A673 (cell line): ENCODE measurements at regions of chr4 and their contacts with region 1.

Region 1: DNA sequence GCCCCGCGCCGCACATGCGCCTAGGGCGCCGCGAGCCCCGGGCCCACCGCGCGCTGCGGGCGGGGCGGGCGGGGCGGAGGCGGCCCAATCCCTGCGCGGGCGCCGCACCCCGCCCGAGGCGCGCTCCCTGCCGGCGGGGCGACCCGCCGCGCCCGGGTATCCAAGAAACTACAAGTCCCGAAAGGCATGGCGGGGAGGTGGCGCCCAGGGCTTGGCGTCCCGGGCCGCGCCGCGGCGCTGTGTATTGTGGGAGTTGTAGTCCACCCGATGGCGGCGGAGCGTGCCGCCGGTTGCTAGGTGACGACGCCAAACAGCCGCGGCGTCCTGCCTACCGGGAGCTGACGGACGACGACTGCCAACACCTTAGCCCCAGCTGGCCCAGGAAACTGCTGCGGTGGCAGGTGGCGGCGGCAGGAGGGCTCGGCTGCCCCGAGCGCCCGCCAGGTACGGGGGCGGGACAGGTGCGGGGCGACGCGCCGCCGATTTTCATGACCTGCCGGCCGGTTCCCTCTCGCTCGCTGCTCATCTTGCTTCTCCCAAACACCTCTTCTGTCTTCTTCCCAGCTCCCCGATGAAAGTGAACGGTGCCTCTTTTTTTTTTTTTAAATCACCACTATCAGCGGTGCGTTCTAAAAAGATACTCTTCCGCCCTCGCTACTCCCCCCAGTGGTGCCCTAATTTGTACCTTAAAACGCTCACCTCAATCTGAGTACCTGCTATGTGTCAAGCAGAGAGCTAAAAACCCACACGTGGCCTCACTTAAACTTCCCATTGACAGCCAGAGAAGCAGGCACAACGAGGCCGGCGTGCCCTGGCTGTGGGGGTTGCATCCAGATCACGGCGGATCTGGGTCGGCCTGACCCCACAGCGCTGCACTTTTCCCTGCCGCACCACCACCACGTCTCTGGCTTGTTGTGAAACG is at the start of gene CFAP99:
- DNase-seq: peak; percentile 98
- H3K4me3 ChIP-seq: peak within 1 kb of the TSS; percentile 59
- H3K27ac ChIP-seq: no peak within 1 kb of the TSS
- H3K4me1 ChIP-seq: peaks cover 18% of the 10 kb centered on the region
- H3K27me3 ChIP-seq: peaks cover 25% of the 10 kb centered on the region
- CTCF ChIP-seq: 0 out of 2 replicates have a peak, but pooled peaks have one; percentile 6
- total RNA-seq, gene CFAP99: not detected in 2 replicates

Region 2: GRCh38 chr4:1674682-1675081 is 744.2 kb before region 1 on chr4:
- CTCF ChIA-PET with region 1: no interaction called
- POLR2A ChIA-PET with region 1: no interaction called
- intact Hi-C with region 1: no loop called
- DNase-seq: no peak
- H3K4me3 ChIP-seq: no peak overlapping the region
- H3K27ac ChIP-seq: no peak overlapping the region
- H3K4me1 ChIP-seq: no peaks in the 10 kb centered on the region
- H3K27me3 ChIP-seq: no peaks in the 10 kb centered on the region
- CTCF ChIP-seq: no peak

Region 3: GRCh38 chr4:2241410-2242353 is 177.2 kb before region 1 on chr4 and contains the starts of genes HAUS3 and POLN:
- CTCF ChIA-PET with region 1: no interaction called
- POLR2A ChIA-PET with region 1: no interaction called
- intact Hi-C with region 1: loop called (anchors 5 kb)
- DNase-seq: peak; percentile 98
- H3K4me3 ChIP-seq: peak within 1 kb of the TSS; percentile 95
- H3K27ac ChIP-seq: peak within 1 kb of the TSS; percentile 81
- H3K4me1 ChIP-seq: peaks cover 33% of the 10 kb centered on the region
- H3K27me3 ChIP-seq: no peaks in the 10 kb centered on the region
- CTCF ChIP-seq: no peak
- total RNA-seq, gene HAUS3: 25.6 and 27.7 TPM in 2 replicates
- total RNA-seq, gene POLN: 2.5 and 4.0 TPM in 2 replicates

Region 4: GRCh38 chr4:2262143-2262943 is 156.6 kb before region 1 on chr4:
- CTCF ChIA-PET with region 1: no interaction called
- POLR2A ChIA-PET with region 1: no interaction called
- intact Hi-C with region 1: loop called (anchors 10 kb)
- DNase-seq: peak; percentile 99
- H3K4me3 ChIP-seq: peak overlapping the region; percentile 67
- H3K27ac ChIP-seq: peak overlapping the region; percentile 93
- H3K4me1 ChIP-seq: no peaks in the 10 kb centered on the region
- H3K27me3 ChIP-seq: no peaks in the 10 kb centered on the region
- CTCF ChIP-seq: no peak

Region 5: GRCh38 chr4:2402029-2402428 is 16.9 kb before region 1 on chr4:
- CTCF ChIA-PET with region 1: no interaction called
- POLR2A ChIA-PET with region 1: no interaction called
- intact Hi-C with region 1: no loop called
- DNase-seq: peak; percentile 43
- H3K4me3 ChIP-seq: peak overlapping the region; percentile 3
- H3K27ac ChIP-seq: no peak overlapping the region
- H3K4me1 ChIP-seq: peaks cover 12% of the 10 kb centered on the region
- H3K27me3 ChIP-seq: no peaks in the 10 kb centered on the region
- CTCF ChIP-seq: no peak

Region 6: GRCh38 chr4:2436301-2436700 is 17.4 kb after region 1 on chr4:
- CTCF ChIA-PET with region 1: interaction called, 11 read pairs
- POLR2A ChIA-PET with region 1: no interaction called
- intact Hi-C with region 1: no loop called
- DNase-seq: no peak
- H3K4me3 ChIP-seq: no peak overlapping the region
- H3K27ac ChIP-seq: no peak overlapping the region
- H3K4me1 ChIP-seq: peaks cover 5% of the 10 kb centered on the region
- H3K27me3 ChIP-seq: no peaks in the 10 kb centered on the region
- CTCF ChIP-seq: peak; percentile 37